ENCODE measurements at regions of chr15 and their contacts with region 1.

Region 1: DNA sequence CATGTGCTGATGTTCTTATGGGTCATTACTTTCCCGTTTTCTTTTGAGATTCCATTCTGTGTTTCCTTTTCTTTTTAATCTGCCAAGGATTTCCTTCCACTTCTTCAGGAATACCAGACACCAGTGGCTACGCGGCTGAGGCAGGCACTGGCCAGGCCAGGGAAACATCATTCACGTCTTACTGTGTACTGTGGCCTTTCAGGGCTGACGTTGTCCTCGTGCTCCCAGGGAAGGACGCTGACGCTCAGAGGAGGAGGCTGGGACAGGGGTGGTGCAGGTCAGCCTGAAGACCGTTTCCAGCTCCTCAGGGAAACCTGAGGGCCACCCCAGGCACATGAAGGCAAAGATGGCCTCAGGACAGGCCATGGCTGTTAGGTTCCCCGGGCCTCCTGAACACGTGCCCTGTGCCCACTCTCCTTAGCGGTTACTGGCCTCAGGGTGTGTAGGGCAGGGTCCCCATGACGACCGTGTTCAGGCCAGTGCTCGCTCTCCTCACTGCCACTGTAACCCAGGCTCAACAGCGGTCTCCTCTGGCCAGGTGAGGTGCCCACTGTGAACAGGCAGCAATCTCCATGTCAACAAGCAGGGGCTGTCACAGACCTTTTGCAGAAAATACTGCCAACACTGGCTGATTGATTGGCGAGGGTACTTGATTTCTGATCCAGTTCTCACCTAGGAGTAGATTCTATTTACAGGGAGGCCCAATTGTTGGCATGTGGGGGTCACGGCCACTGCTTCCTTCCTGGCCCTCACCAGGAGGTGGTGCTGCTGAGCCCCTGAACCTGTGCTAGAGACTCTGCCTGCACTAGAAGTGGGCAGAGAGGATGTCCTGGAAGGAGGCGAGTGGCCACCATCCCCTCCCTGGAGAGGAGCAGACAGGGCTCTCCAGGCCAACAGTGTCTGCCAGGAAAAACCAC is 169.5 kb downstream of the ATP10A start:
- DNase-seq: no peak
- H3K4me3 ChIP-seq: no peak overlapping the region
- H3K27ac ChIP-seq: no peak overlapping the region
- H3K4me1 ChIP-seq: peaks cover 6% of the 10 kb centered on the region
- H3K27me3 ChIP-seq: no peaks in the 10 kb centered on the region
- CTCF ChIP-seq: no peak
- POLR2A ChIP-seq: no peak

Region 2: GRCh38 chr15:25378501-25378901 is 315.1 kb before region 1 on chr15:
- intact Hi-C with region 1: no loop called
- DNase-seq: no peak
- H3K4me3 ChIP-seq: no peak overlapping the region
- H3K27ac ChIP-seq: no peak overlapping the region
- H3K4me1 ChIP-seq: no peaks in the 10 kb centered on the region
- H3K27me3 ChIP-seq: no peaks in the 10 kb centered on the region
- CTCF ChIP-seq: no peak
- POLR2A ChIP-seq: no peak

Region 3: DNA sequence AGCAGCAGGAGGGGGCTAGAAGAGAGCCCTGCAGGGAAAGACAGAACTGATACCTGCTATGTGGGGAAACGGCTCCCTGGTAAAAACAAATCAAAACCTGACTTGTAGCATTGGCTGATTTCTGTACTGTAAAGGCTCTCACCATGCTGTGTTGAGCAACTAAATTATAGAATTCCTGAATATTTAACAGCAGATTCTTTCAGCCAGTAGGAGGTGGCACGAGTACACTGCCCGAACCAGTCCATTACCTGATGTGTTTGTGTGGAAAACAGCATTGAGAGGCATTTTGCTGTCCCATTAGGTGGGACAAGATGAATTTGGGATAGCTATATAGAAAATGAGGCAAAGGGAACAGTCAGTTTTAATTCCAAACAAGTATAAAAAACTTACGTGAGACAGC is 31.7 kb before region 1 on chr15:
- intact Hi-C with region 1: no loop called
- DNase-seq: no peak
- H3K4me3 ChIP-seq: no peak overlapping the region
- H3K27ac ChIP-seq: no peak overlapping the region
- H3K4me1 ChIP-seq: no peaks in the 10 kb centered on the region
- H3K27me3 ChIP-seq: no peaks in the 10 kb centered on the region
- CTCF ChIP-seq: no peak
- POLR2A ChIP-seq: no peak

Region 4: DNA sequence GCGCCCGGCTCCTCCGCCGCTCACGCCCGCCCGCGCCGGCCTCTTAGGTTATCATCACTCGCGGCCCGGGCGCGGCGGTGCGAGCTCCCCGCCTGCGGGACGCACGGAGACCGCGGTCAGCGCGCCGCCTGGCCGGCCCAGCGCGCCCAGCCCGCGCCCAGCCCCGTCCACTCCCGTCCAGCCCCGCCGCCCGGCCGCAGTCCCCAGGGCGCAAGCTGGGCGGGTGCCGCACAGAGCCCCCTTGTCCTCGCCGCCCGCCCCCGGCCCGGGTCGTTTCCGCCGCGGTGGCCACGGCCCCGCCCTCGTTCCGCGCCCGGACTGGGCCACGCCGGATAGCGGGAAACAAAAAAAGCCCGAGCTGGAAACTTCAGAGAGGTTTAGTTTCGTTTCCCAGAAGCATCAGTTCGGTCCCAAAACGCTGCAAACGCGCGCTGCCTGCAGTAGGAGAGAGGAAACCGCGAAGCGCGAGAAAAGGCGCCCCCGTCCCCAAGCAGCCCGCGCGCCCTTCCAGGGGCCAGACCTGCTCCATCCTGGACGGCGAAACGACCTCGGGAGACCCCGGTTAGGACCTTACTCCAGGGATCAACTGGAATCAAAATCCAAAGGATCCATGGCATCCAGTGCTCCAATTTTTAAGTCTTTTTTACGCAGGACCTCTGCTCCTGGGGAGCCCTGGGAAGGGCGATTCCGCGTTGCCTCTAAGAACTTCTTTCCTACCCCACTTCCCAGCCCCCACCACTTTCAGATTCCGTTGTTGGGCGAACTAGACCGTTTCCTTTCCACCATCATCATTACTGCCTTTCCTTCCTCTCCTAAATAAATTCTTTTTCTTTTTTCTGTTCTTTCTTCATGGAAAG is 169.8 kb after region 1 on chr15 and contains the start of gene ATP10A:
- intact Hi-C with region 1: loop called (anchors 2 kb)
- DNase-seq: no peak
- H3K4me3 ChIP-seq: peak within 1 kb of the TSS; percentile 56 to 72
- H3K27ac ChIP-seq: peak within 1 kb of the TSS; percentile 5
- H3K4me1 ChIP-seq: peaks cover 37% of the 10 kb centered on the region
- H3K27me3 ChIP-seq: no peaks in the 10 kb centered on the region
- CTCF ChIP-seq: no peak
- POLR2A ChIP-seq: no peak
- total RNA-seq, gene ATP10A: 3.2 TPM

Region 5: GRCh38 chr15:25933456-25934158 is 240.0 kb after region 1 on chr15:
- intact Hi-C with region 1: loop called (anchors 10 kb)
- DNase-seq: no peak
- H3K4me3 ChIP-seq: peak overlapping the region in 1 of 2 donors; percentile 33
- H3K27ac ChIP-seq: no peak overlapping the region
- H3K4me1 ChIP-seq: no peaks in the 10 kb centered on the region
- H3K27me3 ChIP-seq: no peaks in the 10 kb centered on the region
- CTCF ChIP-seq: peak in 2 of 3 experiments; percentile 37 to 47
- POLR2A ChIP-seq: no peak